ENCODE measurements at regions of chr2 and their contacts with region 1.

Region 1: GRCh38 chr2:74482801-74483674 is at the starts of genes CCDC142 and TTC31:
- DNase-seq: peak; percentile 88

Region 2: DNA sequence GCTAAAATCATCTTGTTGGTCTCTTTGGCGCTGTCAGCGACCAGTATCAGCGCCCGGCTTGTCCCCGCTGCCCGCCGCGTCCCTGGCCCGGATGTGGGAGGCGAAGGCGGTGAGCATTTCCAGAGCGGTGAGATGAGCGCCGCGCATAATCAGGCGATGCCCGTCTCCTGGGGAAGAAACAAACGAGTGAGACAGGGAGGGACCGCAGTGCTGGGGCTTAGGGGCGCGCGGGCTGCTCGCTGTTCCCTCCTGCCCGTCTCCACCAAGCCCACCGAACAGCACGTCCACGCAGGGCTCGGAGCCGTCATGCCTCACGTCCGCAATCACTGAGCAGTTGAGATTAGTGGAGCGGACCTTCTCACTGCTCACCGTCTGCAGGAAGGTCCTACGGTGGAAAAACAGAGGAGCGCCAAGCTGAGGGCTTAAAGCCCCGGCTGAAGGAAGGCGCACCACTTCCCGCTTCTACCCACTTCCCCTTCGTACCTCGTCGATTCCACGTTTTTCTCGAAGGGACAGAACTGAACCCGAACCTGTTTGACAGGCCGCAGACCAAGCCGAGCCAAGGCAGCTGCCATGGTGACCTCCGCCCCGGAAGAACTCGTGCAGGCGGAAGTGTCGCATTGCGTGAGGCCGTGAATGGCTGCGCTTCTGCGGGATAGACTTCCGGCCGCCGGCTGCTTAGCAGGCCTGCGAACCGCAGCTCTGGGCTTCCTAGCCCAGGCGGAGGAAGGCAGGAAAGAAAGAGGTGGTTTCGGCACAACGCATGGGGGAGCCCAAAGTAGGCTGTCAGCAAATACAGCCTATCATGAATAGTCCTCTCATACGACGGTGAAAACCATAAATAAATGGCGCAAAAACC is 10.7 kb before region 1 on chr2 and contains the start of gene MRPL53:
- CTCF ChIA-PET with region 1: interaction called, 5 read pairs
- POLR2A ChIA-PET with region 1: interaction called, 46 read pairs
- DNase-seq: peak; percentile 86

Region 3: DNA sequence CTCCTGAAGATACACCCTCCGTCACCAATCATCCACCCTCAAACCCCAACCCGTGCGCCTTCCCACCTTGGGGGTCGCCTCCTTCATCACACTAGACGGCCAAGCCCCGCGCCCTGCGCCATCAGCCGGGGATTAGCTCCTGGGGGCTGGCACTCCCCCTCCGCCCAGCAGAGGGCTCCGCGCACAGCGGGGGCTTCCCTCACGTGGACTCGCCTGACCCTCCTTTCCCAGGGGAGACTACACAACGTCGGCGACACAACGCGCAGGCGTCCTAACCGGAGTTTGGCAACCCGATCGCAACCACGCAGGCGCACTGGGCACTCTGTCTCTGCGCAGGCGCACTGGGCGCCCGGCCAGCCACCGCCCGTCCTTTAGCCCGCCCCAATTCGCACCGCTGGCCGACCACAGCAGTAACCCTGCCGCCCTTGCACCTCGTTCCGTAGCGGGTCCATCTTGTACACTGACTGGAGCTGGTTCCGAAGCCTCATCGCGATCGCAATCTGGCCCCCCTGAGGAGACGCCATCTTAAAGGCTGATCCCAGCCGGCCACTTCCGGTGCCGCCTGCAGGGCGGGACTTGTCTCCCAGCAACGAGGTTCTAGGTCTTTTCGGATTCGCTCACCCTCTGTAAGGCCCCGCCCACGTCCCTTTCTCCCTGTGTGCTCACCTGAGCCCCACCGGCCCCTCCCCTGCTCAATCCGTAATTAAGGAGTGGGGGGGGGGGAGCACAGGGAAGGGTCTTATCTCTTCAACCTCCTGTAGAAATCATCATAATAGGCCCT is 24.3 kb after region 1 on chr2 and contains the start of gene PCGF1:
- CTCF ChIA-PET with region 1: interaction called, 6 read pairs
- POLR2A ChIA-PET with region 1: interaction called, 18 read pairs
- DNase-seq: peak; percentile 97

Region 4: DNA sequence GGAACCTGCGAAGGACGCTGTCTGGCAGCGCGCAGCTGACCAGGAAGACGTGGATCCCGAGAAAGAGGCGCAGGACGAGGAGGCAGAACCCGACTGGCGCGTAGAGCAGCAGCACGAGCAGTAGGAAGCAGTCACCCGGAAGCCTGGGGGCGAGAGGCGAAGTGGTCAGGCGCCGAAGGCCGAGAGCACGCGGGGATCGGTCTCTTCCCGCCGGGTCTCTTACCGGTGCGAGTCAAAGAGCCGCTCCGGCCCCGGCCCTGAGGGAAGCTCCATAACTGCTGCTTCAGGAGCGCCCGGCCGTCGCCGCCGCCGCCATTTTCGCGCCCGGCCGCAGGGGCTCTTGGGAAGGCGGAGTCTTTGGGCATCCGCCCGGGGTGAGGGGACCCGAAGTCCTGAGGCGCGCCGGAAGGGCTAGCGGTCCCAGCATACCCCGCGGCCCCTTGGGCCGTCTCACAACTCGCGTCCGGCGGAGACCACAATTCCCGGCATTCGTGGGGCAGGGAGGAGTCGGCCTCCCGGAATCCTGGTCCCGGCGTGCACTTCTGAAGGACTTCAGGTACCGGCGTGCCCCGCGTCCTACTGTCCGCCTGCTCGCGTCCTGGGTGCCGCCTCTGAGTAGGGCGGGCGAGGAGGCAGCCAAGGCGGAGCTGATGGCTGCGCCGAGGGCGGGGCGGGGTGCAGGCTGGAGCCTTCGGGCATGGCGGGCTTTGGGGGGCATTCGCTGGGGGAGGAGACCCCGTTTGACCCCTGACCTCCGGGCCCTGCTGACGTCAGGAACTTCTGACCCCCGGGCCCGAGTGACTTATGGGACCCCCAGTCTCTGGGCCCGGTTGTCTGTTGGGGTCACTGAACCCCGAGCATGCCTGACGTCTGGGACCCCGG is 46.6 kb after region 1 on chr2 and contains the starts of genes AUP1 and HTRA2:
- CTCF ChIA-PET with region 1: interaction called, 5 read pairs
- POLR2A ChIA-PET with region 1: interaction called, 34 read pairs
- DNase-seq: peak; percentile 96

Region 5: GRCh38 chr2:74587664-74588277 is 104.7 kb after region 1 on chr2:
- CTCF ChIA-PET with region 1: interaction called, 10 read pairs
- POLR2A ChIA-PET with region 1: interaction called, 14 read pairs
- DNase-seq: peak; percentile 75

Measured in HEK293T (cell line).